ENCODE measurements at regions of chr6 and their contacts with region 1.

Region 1: DNA sequence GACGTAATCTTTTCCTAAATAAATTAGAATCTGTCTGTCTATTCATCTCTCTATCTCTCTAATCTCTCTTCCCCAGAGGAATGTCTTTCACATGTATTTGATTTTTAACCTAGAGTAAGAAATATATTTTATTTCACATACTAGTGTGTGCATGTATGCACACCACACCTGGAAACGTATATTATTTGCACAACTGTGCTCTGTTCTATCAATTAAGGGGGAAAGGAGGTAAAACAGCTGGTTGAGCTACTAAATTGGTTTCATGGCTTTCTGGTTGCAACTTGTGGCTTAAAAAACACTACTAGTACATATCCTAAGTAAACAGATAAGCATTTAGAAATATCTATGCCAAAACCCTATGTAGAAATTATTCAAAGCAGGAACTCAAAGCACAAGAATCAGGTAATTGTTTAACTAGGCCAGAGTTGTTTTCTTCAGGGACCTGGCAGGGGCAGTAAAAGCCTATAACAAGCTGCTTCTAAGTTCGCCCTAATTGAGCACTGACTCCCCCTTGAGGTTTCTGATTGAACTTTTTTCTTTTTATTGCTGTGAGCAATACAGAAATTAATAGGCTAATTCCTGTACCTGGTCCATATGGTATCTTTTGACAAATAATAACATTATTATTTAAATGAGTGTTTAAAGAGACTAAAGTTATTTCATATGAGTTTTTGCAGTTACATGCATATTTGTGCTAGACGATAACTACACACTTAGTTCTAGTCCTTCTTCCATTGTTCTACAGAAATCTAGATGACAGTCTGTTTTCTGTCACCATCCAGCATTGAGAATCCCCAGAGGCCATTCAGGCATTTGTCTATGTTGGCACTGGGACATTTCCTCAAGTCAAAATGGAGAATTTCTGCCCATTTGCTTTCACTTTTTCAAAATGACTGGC is 88.6 kb downstream of the MCHR2 start:
- DNase-seq: peak; percentile 50
- H3K4me3 ChIP-seq: no peak overlapping the region
- H3K27ac ChIP-seq: no peak overlapping the region
- H3K4me1 ChIP-seq: no peaks in the 10 kb centered on the region
- H3K27me3 ChIP-seq: peaks cover 3% of the 10 kb centered on the region
- CTCF ChIP-seq: peak; percentile 73 to 75

Region 2: GRCh38 chr6:98880486-98880885 is 1025.0 kb before region 1 on chr6:
- CTCF ChIA-PET with region 1: no interaction called
- dilution Hi-C with region 1: no loop called
- in situ Hi-C with region 1: no loop called
- intact Hi-C with region 1: no loop called
- DNase-seq: no peak
- H3K4me3 ChIP-seq: no peak overlapping the region
- H3K27ac ChIP-seq: no peak overlapping the region
- H3K4me1 ChIP-seq: no peaks in the 10 kb centered on the region
- H3K27me3 ChIP-seq: no peaks in the 10 kb centered on the region
- CTCF ChIP-seq: no peak

Region 3: GRCh38 chr6:99980741-99981140 is 75.3 kb after region 1 on chr6:
- CTCF ChIA-PET with region 1: no interaction called
- dilution Hi-C with region 1: no loop called
- in situ Hi-C with region 1: no loop called
- intact Hi-C with region 1: no loop called
- DNase-seq: no peak
- H3K4me3 ChIP-seq: no peak overlapping the region
- H3K27ac ChIP-seq: no peak overlapping the region
- H3K4me1 ChIP-seq: no peaks in the 10 kb centered on the region
- H3K27me3 ChIP-seq: no peaks in the 10 kb centered on the region
- CTCF ChIP-seq: no peak

Region 4: DNA sequence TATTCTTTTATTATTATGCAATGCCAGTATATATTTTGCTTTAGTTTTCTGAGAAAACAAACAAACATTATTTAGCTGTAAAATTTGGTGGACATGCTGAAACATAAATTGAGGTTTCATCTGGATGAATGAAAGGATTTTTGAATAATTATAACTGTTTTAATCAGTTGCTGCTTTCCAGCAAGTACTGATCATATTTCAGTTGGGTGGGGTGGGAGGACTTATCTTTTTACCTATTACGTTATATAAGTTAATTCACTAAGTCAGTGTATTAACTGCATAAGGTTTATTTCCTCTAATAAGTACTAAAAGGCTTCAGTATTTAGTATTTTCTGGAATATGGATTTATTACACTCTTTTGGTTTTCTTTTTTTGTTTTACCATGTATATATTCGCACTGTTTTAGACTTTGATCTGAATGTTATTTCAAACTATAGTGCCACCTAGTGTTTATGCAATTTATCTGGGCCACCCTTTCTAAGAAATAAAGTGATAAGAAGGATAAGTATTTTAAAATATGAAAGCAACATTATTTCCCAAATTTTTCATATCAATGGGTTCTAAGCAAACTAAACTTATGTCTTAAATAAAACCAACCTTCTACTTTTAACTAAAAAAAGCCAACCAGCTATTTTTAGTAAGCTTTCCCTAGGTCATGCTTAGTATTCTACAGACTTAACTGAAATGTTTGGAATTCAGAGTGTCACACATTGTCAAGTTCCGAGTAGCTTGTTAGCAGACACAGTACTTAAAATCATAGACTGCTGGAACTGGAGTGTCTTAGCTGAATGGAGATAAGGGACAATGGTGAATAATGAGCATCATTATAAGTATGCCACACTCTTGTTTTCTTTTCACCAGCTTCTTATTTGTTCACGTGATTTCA is 194.0 kb after region 1 on chr6:
- CTCF ChIA-PET with region 1: no interaction called
- dilution Hi-C with region 1: no loop called
- in situ Hi-C with region 1: no loop called
- intact Hi-C with region 1: loop called (anchors 1 kb)
- DNase-seq: no peak
- H3K4me3 ChIP-seq: no peak overlapping the region
- H3K27ac ChIP-seq: no peak overlapping the region
- H3K4me1 ChIP-seq: no peaks in the 10 kb centered on the region
- H3K27me3 ChIP-seq: peaks cover 2% of the 10 kb centered on the region
- CTCF ChIP-seq: peak; percentile 55

Measured in mammary epithelial cell (primary cell).